ENCODE measurements at regions of chr11 and their contacts with region 1.

Region 1: DNA sequence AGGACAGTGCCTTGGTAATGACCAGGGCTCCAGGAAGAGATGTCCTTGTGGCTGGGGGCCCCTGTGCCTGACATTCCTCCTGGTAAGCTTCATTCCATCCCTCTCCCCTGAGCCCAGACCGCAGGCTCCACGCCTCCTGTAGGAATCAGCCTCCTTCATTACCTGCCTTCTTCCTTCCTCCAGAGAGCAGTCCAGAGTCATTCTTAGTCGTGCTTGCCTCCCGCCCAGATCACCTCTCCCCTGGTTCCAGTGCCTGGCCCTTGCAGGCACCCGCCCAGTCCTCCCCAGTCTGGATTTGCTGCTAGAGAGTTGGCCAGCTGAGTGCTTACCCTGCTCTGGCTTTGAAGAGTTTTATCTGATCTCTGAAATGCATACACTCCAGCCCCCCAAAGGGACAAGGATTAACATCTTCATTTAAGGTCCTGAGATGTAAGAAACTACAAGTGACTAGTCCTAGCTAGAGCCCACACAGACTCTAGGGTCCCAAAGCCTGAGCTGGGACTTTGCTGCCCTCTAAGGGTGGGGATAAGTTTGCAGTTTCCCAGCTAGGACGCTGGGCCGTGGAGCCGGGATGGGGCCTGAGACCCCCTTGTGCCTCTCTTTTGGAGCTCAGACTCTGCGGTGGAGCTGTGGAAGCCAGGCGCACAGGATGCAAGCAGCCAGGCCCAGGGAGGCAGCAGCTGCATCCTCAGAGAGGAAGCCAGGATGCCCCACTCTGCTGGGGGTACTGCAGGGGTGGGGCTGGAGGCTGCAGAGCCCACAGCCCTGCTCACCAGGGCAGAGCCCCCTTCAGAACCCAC is 1.6 kb downstream of the NR1H3 start:
- DNase-seq: peak; percentile 68 to 71
- H3K4me3 ChIP-seq: no peak overlapping the region
- H3K4me3 Mint-ChIP-seq: peak overlapping the region; percentile 35
- H3K27ac Mint-ChIP-seq: peak overlapping the region; percentile 53
- H3K4me1 ChIP-seq: peaks cover 40% of the 10 kb centered on the region
- H3K4me1 Mint-ChIP-seq: peaks cover 36% of the 10 kb centered on the region
- H3K27me3 ChIP-seq: no peaks in the 10 kb centered on the region
- H3K27me3 Mint-ChIP-seq: no peaks in the 10 kb centered on the region
- CTCF ChIP-seq: peak; percentile 78 to 79

Region 2: GRCh38 chr11:47060807-47061206 is 198.6 kb before region 1 on chr11:
- CTCF ChIA-PET with region 1: no interaction called
- POLR2A ChIA-PET with region 1: no interaction called
- intact Hi-C with region 1: no loop called
- DNase-seq: no peak
- H3K4me3 ChIP-seq: no peak overlapping the region
- H3K4me3 Mint-ChIP-seq: peak overlapping the region; percentile 29
- H3K27ac Mint-ChIP-seq: peak overlapping the region; percentile 66
- H3K4me1 ChIP-seq: peaks cover 37% of the 10 kb centered on the region
- H3K4me1 Mint-ChIP-seq: peaks cover 28% of the 10 kb centered on the region
- H3K27me3 ChIP-seq: no peaks in the 10 kb centered on the region
- H3K27me3 Mint-ChIP-seq: no peaks in the 10 kb centered on the region
- CTCF ChIP-seq: no peak

Region 3: DNA sequence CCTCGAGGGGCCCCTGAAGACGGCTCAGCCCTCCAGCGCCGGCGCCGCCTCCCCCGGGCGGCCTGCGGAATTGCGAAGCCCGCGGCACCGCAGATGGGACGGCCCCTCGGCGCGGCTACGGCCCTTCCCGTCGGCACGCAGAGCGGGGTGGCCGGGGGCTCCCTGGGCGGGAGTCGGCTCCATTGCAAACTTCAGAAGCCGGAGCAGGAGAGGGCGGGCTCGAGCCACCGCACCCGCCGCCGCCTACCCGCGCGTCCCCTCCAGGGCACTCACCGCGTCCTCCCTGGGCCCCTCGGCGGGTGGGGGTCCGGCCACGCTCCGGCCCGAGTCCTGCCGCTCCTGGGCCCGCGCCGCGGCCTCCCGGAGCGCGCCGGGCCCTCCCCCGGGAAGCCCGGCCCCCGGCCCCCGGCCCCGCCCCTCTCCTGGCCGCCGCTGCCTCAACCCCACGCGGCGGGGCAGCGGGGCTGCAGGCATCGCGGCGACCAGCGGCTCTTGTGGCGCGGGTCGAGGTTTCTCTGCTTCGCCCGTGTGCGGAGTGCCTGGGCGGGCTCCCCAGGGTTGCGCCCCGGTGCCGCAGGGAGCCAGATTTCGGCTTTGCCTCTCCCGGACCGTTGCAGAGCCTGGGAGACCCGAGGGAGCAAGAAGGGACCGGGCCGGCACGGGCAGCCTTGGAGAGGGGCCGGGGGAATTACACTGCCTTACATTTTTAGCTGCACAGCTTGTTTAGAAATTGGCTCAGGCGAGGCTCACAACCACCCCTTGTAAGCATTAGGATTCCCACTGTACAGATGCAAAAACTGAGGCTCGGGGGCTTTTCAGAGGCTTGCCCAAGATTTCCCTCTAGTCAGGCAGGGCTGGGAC is 73.1 kb before region 1 on chr11 and contains the start of gene PACSIN3:
- CTCF ChIA-PET with region 1: interaction called, 31 read pairs
- POLR2A ChIA-PET with region 1: interaction called, 7 read pairs
- intact Hi-C with region 1: loop called (anchors 1 kb)
- DNase-seq: peak; percentile 71 to 79
- H3K4me3 ChIP-seq: peak within 1 kb of the TSS; percentile 74
- H3K4me3 Mint-ChIP-seq: peak within 1 kb of the TSS; percentile 92
- H3K27ac Mint-ChIP-seq: peak within 1 kb of the TSS; percentile 91
- H3K4me1 ChIP-seq: peaks cover 36% of the 10 kb centered on the region
- H3K4me1 Mint-ChIP-seq: peaks cover 11% of the 10 kb centered on the region
- H3K27me3 ChIP-seq: no peaks in the 10 kb centered on the region
- H3K27me3 Mint-ChIP-seq: no peaks in the 10 kb centered on the region
- CTCF ChIP-seq: no peak
- total RNA-seq, gene PACSIN3: 72.8 and 76.7 TPM in 2 replicates

Region 4: GRCh38 chr11:47233989-47234668 is 25.2 kb before region 1 on chr11:
- CTCF ChIA-PET with region 1: interaction called, 28 read pairs
- POLR2A ChIA-PET with region 1: interaction called, 9 read pairs
- intact Hi-C with region 1: no loop called
- DNase-seq: peak in 1 of 2 experiments; percentile 49
- H3K4me3 ChIP-seq: no peak overlapping the region
- H3K4me3 Mint-ChIP-seq: no peak overlapping the region
- H3K27ac Mint-ChIP-seq: peak overlapping the region; percentile 47
- H3K4me1 ChIP-seq: peaks cover 19% of the 10 kb centered on the region
- H3K4me1 Mint-ChIP-seq: peaks cover 12% of the 10 kb centered on the region
- H3K27me3 ChIP-seq: no peaks in the 10 kb centered on the region
- H3K27me3 Mint-ChIP-seq: no peaks in the 10 kb centered on the region
- CTCF ChIP-seq: peak; percentile 22 to 50

Region 5: GRCh38 chr11:47355283-47356128 is 96.1 kb after region 1 on chr11:
- CTCF ChIA-PET with region 1: interaction called, 27 read pairs
- POLR2A ChIA-PET with region 1: no interaction called
- intact Hi-C with region 1: loop called (anchors 1 kb)
- DNase-seq: peak; percentile 96 to 97
- H3K4me3 ChIP-seq: peak overlapping the region; percentile 23
- H3K4me3 Mint-ChIP-seq: no peak overlapping the region
- H3K27ac Mint-ChIP-seq: no peak overlapping the region
- H3K4me1 ChIP-seq: peaks cover 4% of the 10 kb centered on the region; the same call in 1 of the 2 replicates
- H3K4me1 Mint-ChIP-seq: no peaks in the 10 kb centered on the region
- H3K27me3 ChIP-seq: no peaks in the 10 kb centered on the region
- H3K27me3 Mint-ChIP-seq: no peaks in the 10 kb centered on the region
- CTCF ChIP-seq: peak; percentile 97 to 100

Measured in Caco-2 (cell line).